IMR-90 (cell line): ENCODE measurements at regions of chr1 and their contacts with region 1.

Region 1: GRCh38 chr1:13960375-13960987 is 260.5 kb downstream of the PRDM2 start:
- DNase-seq: peak; percentile 41
- ATAC-seq: peak; percentile 92
- H3K4me3 ChIP-seq: no peak overlapping the region
- H3K27ac ChIP-seq: no peak overlapping the region
- H3K4me1 ChIP-seq: no peaks in the 10 kb centered on the region
- H3K27me3 ChIP-seq: no peaks in the 10 kb centered on the region
- CTCF ChIP-seq: peak; percentile 90
- POLR2A ChIP-seq: no peak
- RAD21 ChIP-seq: peak; percentile 94

Region 2: GRCh38 chr1:13435458-13435857 is 525.0 kb before region 1 on chr1:
- CTCF ChIA-PET with region 1: no interaction called
- POLR2A ChIA-PET with region 1: no interaction called
- dilution Hi-C with region 1: no loop called
- in situ Hi-C with region 1: no loop called
- intact Hi-C with region 1: no loop called
- DNase-seq: no peak
- ATAC-seq: no peak
- H3K4me3 ChIP-seq: no peak overlapping the region
- H3K27ac ChIP-seq: no peak overlapping the region
- H3K4me1 ChIP-seq: no peaks in the 10 kb centered on the region
- H3K27me3 ChIP-seq: no peaks in the 10 kb centered on the region
- CTCF ChIP-seq: no peak
- POLR2A ChIP-seq: no peak
- RAD21 ChIP-seq: no peak

Region 3: GRCh38 chr1:13593511-13594131 is 366.9 kb before region 1 on chr1:
- CTCF ChIA-PET with region 1: no interaction called
- POLR2A ChIA-PET with region 1: no interaction called
- dilution Hi-C with region 1: no loop called
- in situ Hi-C with region 1: no loop called
- intact Hi-C with region 1: no loop called
- DNase-seq: peak; percentile 36
- ATAC-seq: 0 out of 2 replicates have a peak, but pooled peaks have one; percentile 27
- H3K4me3 ChIP-seq: no peak overlapping the region
- H3K27ac ChIP-seq: peak overlapping the region; percentile 79
- H3K4me1 ChIP-seq: no peaks in the 10 kb centered on the region
- H3K27me3 ChIP-seq: no peaks in the 10 kb centered on the region
- CTCF ChIP-seq: no peak
- POLR2A ChIP-seq: no peak
- RAD21 ChIP-seq: no peak

Region 4: GRCh38 chr1:13662493-13662892 is 298.0 kb before region 1 on chr1:
- CTCF ChIA-PET with region 1: no interaction called
- POLR2A ChIA-PET with region 1: no interaction called
- dilution Hi-C with region 1: no loop called
- in situ Hi-C with region 1: loop called (anchors 5 kb)
- intact Hi-C with region 1: loop called (anchors 1 kb)
- DNase-seq: no peak
- ATAC-seq: no peak
- H3K4me3 ChIP-seq: no peak overlapping the region
- H3K27ac ChIP-seq: no peak overlapping the region
- H3K4me1 ChIP-seq: no peaks in the 10 kb centered on the region
- H3K27me3 ChIP-seq: no peaks in the 10 kb centered on the region
- CTCF ChIP-seq: no peak
- POLR2A ChIP-seq: no peak
- RAD21 ChIP-seq: no peak

Region 5: DNA sequence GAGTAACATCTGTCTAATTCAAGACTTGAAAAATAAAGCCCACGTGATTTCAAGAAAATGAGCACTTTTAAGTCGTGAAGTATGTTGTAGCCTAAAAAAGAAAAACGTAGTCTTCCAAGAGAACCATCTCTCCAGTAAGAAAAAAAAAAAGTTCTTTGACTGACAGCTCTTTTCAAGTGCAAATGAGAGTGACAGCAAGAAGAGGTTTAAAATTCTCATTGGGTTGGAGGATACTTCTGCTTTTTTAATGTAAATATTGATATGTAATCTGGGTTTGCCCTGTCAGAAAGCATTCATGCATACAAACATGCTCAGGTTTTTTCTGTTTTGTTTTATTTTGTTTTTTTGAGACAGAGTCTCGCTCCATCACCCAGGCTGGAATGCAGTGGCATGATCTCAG is 292.8 kb before region 1 on chr1:
- CTCF ChIA-PET with region 1: no interaction called
- POLR2A ChIA-PET with region 1: no interaction called
- dilution Hi-C with region 1: no loop called
- in situ Hi-C with region 1: loop called (anchors 5 kb)
- intact Hi-C with region 1: loop called (anchors 1 kb)
- DNase-seq: no peak
- ATAC-seq: no peak
- H3K4me3 ChIP-seq: no peak overlapping the region
- H3K27ac ChIP-seq: no peak overlapping the region
- H3K4me1 ChIP-seq: no peaks in the 10 kb centered on the region
- H3K27me3 ChIP-seq: no peaks in the 10 kb centered on the region
- CTCF ChIP-seq: no peak
- POLR2A ChIP-seq: no peak
- RAD21 ChIP-seq: no peak

Region 6: GRCh38 chr1:13807213-13807612 is 153.3 kb before region 1 on chr1:
- CTCF ChIA-PET with region 1: no interaction called
- POLR2A ChIA-PET with region 1: no interaction called
- dilution Hi-C with region 1: no loop called
- in situ Hi-C with region 1: no loop called
- intact Hi-C with region 1: loop called (anchors 2 kb)
- DNase-seq: no peak
- ATAC-seq: peak; percentile 37; the same call in 1 of the 2 replicates
- H3K4me3 ChIP-seq: no peak overlapping the region
- H3K27ac ChIP-seq: no peak overlapping the region
- H3K4me1 ChIP-seq: no peaks in the 10 kb centered on the region
- H3K27me3 ChIP-seq: no peaks in the 10 kb centered on the region
- CTCF ChIP-seq: peak; percentile 41
- POLR2A ChIP-seq: no peak
- RAD21 ChIP-seq: peak; percentile 38